ENCODE measurements at regions of chr12 and their contacts with region 1.

Region 1: GRCh38 chr12:11812586-11813427 is 163.3 kb downstream of the ETV6 start:
- DNase-seq: peak; percentile 32
- ATAC-seq: peak; percentile 83
- H3K4me3 Mint-ChIP-seq: peak overlapping the region; percentile 65
- H3K27ac Mint-ChIP-seq: peak overlapping the region; percentile 87
- H3K4me1 Mint-ChIP-seq: peaks cover 66% of the 10 kb centered on the region
- H3K27me3 Mint-ChIP-seq: no peaks in the 10 kb centered on the region
- CTCF ChIP-seq: no peak

Region 2: DNA sequence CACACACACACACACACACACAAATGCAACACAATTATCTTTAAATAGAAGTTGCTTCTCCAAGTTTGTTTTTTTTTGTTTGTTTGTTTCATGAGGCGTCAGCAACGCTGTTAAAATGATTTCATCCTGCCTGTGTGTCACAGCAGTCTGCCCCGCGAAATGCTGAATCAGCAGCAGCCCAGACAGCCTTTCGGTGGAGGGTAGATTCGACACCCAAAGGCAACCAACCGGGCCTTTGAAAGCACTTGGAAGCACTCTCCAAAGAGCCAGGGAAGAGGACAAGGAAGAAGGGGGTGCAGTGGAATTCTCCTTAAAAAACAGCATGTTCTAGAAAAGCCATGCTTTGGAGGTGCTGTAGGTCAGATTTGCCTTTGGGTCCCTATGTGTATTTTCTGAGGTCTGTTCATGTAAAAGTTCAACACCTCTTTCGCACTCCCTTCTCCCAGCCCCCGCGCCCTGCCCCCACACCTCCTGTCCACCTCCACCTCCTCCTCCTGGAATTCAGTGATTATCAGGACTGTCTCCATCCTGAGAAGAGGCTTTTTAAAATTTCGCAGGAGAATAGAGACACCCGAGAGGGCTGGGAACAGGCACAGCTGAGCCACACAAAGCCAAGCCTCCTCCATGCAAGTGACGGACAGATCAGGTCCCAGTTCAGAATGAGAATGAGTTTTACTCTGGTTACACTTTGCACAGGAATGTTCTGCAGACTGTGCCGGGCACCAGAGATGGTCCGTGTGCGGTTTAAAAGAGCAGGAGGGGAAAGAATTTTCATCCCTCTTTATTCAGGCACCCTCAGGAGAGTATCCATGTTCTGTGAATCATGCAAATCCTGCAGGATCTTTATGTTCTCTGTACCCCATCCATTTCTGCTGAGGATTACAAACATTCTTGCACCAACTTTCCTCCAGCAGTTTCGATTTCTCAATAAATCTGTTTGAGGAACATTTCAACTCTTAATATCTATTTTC is 14.6 kb after region 1 on chr12:
- CTCF ChIA-PET with region 1: interaction called, 4 read pairs
- POLR2A ChIA-PET with region 1: interaction called, 5 read pairs
- intact Hi-C with region 1: loop called (anchors 2 kb)
- DNase-seq: no peak
- ATAC-seq: no peak
- H3K4me3 Mint-ChIP-seq: no peak overlapping the region
- H3K27ac Mint-ChIP-seq: no peak overlapping the region
- H3K4me1 Mint-ChIP-seq: peaks cover 47% of the 10 kb centered on the region
- H3K27me3 Mint-ChIP-seq: no peaks in the 10 kb centered on the region
- CTCF ChIP-seq: no peak

Region 3: GRCh38 chr12:11855983-11856374 is 43.2 kb after region 1 on chr12:
- CTCF ChIA-PET with region 1: no interaction called
- POLR2A ChIA-PET with region 1: no interaction called
- intact Hi-C with region 1: no loop called
- DNase-seq: no peak
- ATAC-seq: peak; percentile 39
- H3K4me3 Mint-ChIP-seq: peak overlapping the region; percentile 67
- H3K27ac Mint-ChIP-seq: peak overlapping the region; percentile 81
- H3K4me1 Mint-ChIP-seq: peaks cover 35% of the 10 kb centered on the region
- H3K27me3 Mint-ChIP-seq: no peaks in the 10 kb centered on the region
- CTCF ChIP-seq: no peak

Region 4: DNA sequence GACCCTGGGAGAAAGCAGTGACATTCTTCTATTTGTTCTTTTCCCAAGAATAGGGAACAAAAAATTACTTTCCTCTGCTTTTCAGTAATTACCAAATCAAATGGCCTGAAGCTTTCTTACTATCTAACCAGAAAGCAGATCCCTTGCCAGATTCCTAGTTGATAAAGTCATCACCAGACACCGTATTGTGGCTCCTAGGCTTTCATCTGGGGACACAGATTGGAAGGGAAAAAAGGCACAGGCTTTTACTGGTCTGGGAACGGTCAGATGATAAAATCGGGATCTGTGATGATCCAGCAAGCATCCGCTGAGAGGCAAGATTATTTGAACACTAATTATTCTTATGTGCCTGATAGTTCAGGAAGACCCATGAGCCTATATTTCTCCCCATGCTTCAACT is 178.8 kb after region 1 on chr12:
- CTCF ChIA-PET with region 1: no interaction called
- POLR2A ChIA-PET with region 1: no interaction called
- intact Hi-C with region 1: no loop called
- DNase-seq: no peak
- ATAC-seq: no peak
- H3K4me3 Mint-ChIP-seq: no peak overlapping the region
- H3K27ac Mint-ChIP-seq: no peak overlapping the region
- H3K4me1 Mint-ChIP-seq: no peaks in the 10 kb centered on the region
- H3K27me3 Mint-ChIP-seq: no peaks in the 10 kb centered on the region
- CTCF ChIP-seq: no peak

Measured in activated B cell treated with CpG ODN at 0.5 μM for 24 hours (primary cell).